Natural killer cell (primary cell): ENCODE measurements at regions of chr17 and their contacts with region 1.

Region 1: GRCh38 chr17:40113110-40113906 is 8.5 kb upstream of the MSL1 start:
- DNase-seq: peak; percentile 86 to 96
- ATAC-seq: peak; percentile 81 to 93 (median 88)
- H3K4me3 ChIP-seq: peak overlapping the region; percentile 46
- H3K4me3 Mint-ChIP-seq: peak overlapping the region; percentile 86
- H3K27ac ChIP-seq: peak overlapping the region; percentile 48
- H3K27ac Mint-ChIP-seq: peak overlapping the region; percentile 98 to 99
- H3K4me1 ChIP-seq: peaks cover 52% of the 10 kb centered on the region
- H3K4me1 Mint-ChIP-seq: peaks cover 46 to 49% of the 10 kb centered on the region in 2 donors
- H3K27me3 ChIP-seq: no peaks in the 10 kb centered on the region
- H3K27me3 Mint-ChIP-seq: no peaks in the 10 kb centered on the region
- CTCF ChIP-seq: peak; percentile 82

Region 2: GRCh38 chr17:39980351-39981206 is 132.7 kb before region 1 on chr17 and contains the start of gene PSMD3:
- intact Hi-C with region 1: no loop called
- DNase-seq: peak; percentile 97 to 100
- ATAC-seq: peak; percentile 89 to 97 (median 91)
- H3K4me3 ChIP-seq: peak within 1 kb of the TSS; percentile 70
- H3K4me3 Mint-ChIP-seq: peak within 1 kb of the TSS; percentile 98
- H3K27ac ChIP-seq: peak within 1 kb of the TSS; percentile 91
- H3K27ac Mint-ChIP-seq: peak within 1 kb of the TSS; percentile 99
- H3K4me1 ChIP-seq: peaks cover 18% of the 10 kb centered on the region
- H3K4me1 Mint-ChIP-seq: peaks cover 27 to 29% of the 10 kb centered on the region in 2 donors
- H3K27me3 ChIP-seq: no peaks in the 10 kb centered on the region
- H3K27me3 Mint-ChIP-seq: no peaks in the 10 kb centered on the region
- CTCF ChIP-seq: peak; percentile 71
- total RNA-seq, gene PSMD3: 66.1 to 83.8 (median 78.9) TPM

Region 3: GRCh38 chr17:40062329-40063186 is 50.8 kb before region 1 on chr17 and contains the start of gene THRA:
- intact Hi-C with region 1: loop called (anchors 5 kb)
- DNase-seq: peak; percentile 69 to 86
- ATAC-seq: peak; percentile 93 to 96 (median 95)
- H3K4me3 ChIP-seq: peak within 1 kb of the TSS; percentile 79
- H3K4me3 Mint-ChIP-seq: peak within 1 kb of the TSS; percentile 92
- H3K27ac ChIP-seq: peak within 1 kb of the TSS; percentile 45
- H3K27ac Mint-ChIP-seq: peak within 1 kb of the TSS; percentile 69 to 81
- H3K4me1 ChIP-seq: peaks cover 44% of the 10 kb centered on the region
- H3K4me1 Mint-ChIP-seq: peaks cover 35 to 46% of the 10 kb centered on the region in 2 donors
- H3K27me3 ChIP-seq: no peaks in the 10 kb centered on the region
- H3K27me3 Mint-ChIP-seq: no peaks in the 10 kb centered on the region
- CTCF ChIP-seq: no peak
- total RNA-seq, gene THRA: 40.8 to 55.7 (median 42.3) TPM

Region 4: DNA sequence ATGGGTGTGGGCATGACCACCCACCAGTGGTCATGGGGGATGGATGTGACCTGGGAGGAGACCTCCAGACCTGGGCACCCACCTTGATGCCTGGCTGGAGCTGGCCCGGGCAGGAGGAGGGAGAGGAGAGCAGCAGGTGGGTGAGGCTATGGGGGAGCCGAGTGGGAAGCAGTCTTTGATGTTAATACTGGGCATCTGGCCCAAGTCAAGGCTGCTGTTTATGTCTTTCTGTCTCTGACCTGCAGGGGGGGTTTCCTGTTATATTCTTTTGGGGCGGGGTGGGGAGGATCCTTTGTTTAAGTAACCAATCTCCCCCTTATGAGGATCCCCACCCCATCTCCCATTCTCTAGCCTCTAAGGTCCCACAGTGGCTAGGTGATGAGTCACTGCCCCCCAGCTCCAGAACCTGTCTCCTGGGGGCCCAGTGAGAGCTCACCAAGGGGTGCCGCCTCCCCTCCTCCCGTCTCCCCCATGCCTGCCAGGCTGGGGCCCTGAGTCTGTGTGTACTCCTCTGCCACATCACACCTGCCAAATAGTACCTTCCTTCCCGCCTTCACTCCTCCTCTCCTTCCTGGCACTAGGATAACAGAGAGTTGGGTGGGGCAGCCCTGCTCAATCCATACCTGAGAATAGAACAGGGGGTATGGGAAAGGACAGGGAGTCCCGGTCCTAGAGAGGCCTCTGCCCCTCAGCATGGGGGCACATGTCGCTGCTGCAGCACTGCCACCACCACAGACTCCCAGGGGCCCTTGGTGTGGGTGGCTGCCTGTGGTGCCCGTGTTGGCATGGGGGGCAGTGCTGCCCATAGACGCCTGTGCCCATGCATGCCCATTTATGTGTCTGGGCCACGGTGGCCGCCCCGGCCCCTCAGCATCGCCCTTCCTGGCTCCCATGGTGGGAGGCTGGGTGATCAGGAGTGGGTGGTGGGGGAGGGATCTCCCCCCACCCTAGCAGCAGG is 43.3 kb before region 1 on chr17:
- intact Hi-C with region 1: loop called (anchors 2 kb)
- DNase-seq: peak; percentile 52 to 75
- ATAC-seq: peak; percentile 68 to 71 (median 69)
- H3K4me3 ChIP-seq: no peak overlapping the region
- H3K4me3 Mint-ChIP-seq: peak overlapping the region; percentile 87
- H3K27ac ChIP-seq: peak overlapping the region; percentile 71
- H3K27ac Mint-ChIP-seq: peak overlapping the region; percentile 84 to 95
- H3K4me1 ChIP-seq: peaks cover 76% of the 10 kb centered on the region
- H3K4me1 Mint-ChIP-seq: peaks cover 53 to 85% of the 10 kb centered on the region in 2 donors
- H3K27me3 ChIP-seq: no peaks in the 10 kb centered on the region
- H3K27me3 Mint-ChIP-seq: no peaks in the 10 kb centered on the region
- CTCF ChIP-seq: peak; percentile 59

Region 5: DNA sequence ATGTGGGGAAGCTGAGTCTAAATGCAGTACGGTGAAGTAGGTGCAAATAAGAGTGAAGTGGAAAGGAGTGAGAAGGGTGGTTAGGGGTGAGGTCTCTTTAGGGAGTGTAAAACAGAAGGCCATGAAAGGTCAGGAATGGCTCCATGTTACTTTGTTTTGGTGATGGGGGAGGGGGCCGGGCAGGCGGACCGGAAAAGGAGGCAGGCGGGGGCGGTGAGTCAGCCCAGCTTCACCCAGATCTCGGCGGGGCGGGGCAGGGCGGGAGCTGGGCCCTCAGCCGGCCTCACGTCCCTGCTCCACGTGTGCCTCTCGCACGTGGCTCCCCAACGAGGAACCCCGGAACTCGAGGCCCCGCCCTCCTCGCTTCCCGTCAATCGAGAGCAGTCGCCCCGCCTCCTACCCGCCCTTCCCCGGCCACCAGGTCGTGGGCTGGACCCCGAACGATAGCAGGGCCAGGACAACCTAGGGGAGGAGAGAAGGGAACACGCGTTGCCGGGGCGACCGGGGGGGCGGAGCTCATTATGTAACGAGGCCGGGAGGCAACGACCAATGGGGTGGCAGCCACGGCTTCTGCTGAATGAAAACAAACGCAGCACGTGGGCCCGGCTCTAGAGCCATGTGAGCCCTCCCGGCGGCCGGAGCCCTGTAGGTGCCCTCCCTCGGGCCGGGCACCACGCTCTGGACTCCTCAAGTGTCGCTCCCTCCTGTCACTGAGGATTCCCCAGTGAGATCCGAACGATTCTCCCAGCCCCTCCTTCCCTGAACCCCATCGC is 14.3 kb before region 1 on chr17:
- intact Hi-C with region 1: loop called (anchors 1 kb)
- DNase-seq: peak; percentile 98 to 99
- ATAC-seq: peak; percentile 65 to 83 (median 70)
- H3K4me3 ChIP-seq: peak overlapping the region; percentile 55
- H3K4me3 Mint-ChIP-seq: peak overlapping the region; percentile 98
- H3K27ac ChIP-seq: peak overlapping the region; percentile 90
- H3K27ac Mint-ChIP-seq: peak overlapping the region; percentile 94 to 96
- H3K4me1 ChIP-seq: peaks cover 87% of the 10 kb centered on the region
- H3K4me1 Mint-ChIP-seq: peaks cover 67 to 75% of the 10 kb centered on the region in 2 donors
- H3K27me3 ChIP-seq: no peaks in the 10 kb centered on the region
- H3K27me3 Mint-ChIP-seq: no peaks in the 10 kb centered on the region
- CTCF ChIP-seq: no peak

Region 6: DNA sequence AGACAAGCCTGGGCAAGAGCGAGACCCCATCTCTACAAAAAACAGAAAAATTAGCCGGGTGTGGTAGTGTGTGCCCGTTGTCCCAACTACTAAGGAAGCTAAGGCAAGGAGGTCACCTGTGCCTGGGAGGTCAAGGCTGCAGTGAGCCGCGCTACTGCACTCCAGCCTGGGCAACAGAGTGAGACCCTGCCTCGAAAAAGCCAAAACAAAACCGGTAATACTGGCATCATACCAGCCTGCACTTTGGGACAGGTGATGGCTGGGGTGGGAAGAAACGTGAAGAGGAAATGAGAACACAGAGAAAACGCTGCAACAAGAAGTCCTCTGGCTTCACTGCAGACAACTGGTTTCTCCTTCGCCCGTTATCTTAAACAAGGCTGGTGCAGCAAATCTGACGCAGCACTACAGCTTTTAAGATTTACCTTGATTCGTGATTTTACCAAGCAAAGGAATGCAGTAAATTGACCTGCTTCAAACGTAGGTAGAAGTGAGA is 26.3 kb after region 1 on chr17:
- intact Hi-C with region 1: loop called (anchors 1 kb)
- DNase-seq: no peak
- ATAC-seq: peak in 2 of 3 donors; percentile 2 to 6
- H3K4me3 ChIP-seq: peak overlapping the region; percentile 51
- H3K4me3 Mint-ChIP-seq: peak overlapping the region; percentile 95
- H3K27ac ChIP-seq: peak overlapping the region; percentile 94
- H3K27ac Mint-ChIP-seq: peak overlapping the region; percentile 97
- H3K4me1 ChIP-seq: peaks cover 16% of the 10 kb centered on the region
- H3K4me1 Mint-ChIP-seq: peaks cover 28 to 34% of the 10 kb centered on the region in 2 donors
- H3K27me3 ChIP-seq: no peaks in the 10 kb centered on the region
- H3K27me3 Mint-ChIP-seq: no peaks in the 10 kb centered on the region
- CTCF ChIP-seq: no peak

Region 7: DNA sequence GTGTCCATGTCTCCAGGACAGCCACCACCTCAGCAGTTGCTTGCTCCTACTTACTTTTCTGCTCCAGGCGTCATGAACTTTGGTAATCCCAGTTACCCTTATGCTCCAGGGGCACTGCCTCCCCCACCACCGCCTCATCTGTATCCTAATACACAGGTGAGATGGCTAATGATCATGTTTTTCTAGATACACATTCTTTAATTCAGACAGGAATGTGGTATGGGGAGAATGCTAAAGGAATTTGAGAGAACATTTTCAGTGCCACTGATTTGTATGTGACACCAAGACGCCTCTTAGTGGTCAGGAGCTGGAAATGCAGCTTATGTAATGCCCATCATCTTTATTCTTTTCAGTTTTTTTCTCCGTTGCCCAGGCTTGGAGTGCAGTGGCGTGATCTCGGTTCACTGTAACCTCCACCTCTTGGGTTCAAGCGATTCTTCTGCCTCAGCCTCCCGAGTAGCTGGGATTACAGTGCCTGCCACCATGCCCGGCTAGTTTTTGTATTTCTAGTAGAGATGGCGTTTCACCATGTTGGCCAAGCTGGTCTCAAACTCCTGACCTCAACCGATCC is 55.0 kb after region 1 on chr17:
- intact Hi-C with region 1: loop called (anchors 1 kb)
- DNase-seq: peak in 1 of 2 donors; percentile 83
- ATAC-seq: peak; percentile 81 to 96 (median 83)
- H3K4me3 ChIP-seq: no peak overlapping the region
- H3K4me3 Mint-ChIP-seq: no peak overlapping the region
- H3K27ac ChIP-seq: no peak overlapping the region
- H3K27ac Mint-ChIP-seq: peak overlapping the region; percentile 74 to 90
- H3K4me1 ChIP-seq: no peaks in the 10 kb centered on the region
- H3K4me1 Mint-ChIP-seq: peaks cover 6 to 9% of the 10 kb centered on the region in 2 donors
- H3K27me3 ChIP-seq: no peaks in the 10 kb centered on the region
- H3K27me3 Mint-ChIP-seq: no peaks in the 10 kb centered on the region
- CTCF ChIP-seq: peak; percentile 75